Left cardiac atrium (tissue), 4 donors: ENCODE measurements at regions of chr4 and their contacts with region 1.

Region 1: DNA sequence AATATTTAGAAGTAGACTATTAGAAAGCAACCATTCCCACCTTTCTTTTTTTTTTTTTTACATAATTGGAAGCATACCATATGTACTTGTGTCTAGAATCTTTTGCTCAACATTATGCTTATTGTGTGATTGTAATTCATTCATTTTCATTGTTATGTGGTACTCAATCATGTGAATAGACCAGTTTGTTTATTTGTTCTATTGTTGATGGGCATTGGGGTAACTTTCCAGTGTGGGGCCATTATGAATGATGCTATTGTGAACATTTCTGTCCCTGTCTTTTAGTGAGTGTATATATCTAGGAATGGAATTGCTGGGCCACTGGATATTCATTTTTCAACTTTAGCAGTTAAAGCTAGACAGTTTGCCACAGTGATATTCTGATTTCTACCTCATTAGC is 62.5 kb upstream of the MCUB start:
- DNase-seq: no peak
- ATAC-seq: no peak

Region 2: GRCh38 chr4:109559983-109560686 is 62.6 kb after region 1 on chr4 and contains the start of gene MCUB:
- intact Hi-C with region 1: loop called in 1 of 2 experiments (anchors 10 kb)
- DNase-seq: peak; percentile 93
- ATAC-seq: peak; percentile 98 to 99
- total RNA-seq, gene MCUB: 25.9 to 27.7 TPM

Region 3: DNA sequence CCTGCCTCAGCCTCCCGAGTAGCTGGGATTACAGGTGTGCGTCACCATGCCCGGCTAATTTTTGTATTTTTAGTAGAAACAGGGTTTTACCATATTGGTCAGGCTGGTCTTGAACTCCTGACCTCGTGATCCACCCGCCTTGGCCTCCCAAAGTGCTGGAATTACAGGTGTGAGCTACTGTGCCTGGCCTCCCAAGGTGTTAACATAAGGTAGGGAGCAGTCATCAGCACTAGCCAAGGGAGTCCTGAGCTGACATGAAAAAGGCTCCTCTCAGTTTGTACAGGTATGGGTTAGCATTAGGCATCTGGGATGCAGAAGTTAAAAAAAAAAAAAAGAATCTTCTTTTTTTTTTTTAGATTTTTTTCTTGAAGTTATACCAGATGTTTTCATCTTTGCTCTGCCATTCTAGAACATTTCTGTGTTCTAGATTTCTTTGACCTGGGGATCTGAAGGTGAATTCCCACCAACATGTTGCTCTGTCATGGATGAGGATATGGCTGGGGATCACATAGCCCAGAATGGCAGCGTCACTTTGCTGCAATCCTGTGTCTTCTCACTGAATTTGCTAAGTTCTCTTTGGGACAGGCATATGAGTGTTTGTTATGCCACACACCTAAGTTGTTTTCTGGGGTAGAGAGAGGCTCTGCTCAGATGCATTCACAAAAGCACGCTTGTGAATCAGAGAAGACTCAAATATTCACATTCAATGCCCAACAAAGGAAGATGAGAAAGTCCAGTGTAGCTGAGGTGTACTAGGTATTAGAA is 256.8 kb after region 1 on chr4:
- intact Hi-C with region 1: no loop called
- DNase-seq: no peak
- ATAC-seq: no peak

Region 4: GRCh38 chr4:110087070-110087708 is 589.7 kb after region 1 on chr4:
- intact Hi-C with region 1: no loop called
- DNase-seq: no peak
- ATAC-seq: peak; percentile 41 to 60